ENCODE measurements at regions of chr1 and their contacts with region 1.

Region 1: DNA sequence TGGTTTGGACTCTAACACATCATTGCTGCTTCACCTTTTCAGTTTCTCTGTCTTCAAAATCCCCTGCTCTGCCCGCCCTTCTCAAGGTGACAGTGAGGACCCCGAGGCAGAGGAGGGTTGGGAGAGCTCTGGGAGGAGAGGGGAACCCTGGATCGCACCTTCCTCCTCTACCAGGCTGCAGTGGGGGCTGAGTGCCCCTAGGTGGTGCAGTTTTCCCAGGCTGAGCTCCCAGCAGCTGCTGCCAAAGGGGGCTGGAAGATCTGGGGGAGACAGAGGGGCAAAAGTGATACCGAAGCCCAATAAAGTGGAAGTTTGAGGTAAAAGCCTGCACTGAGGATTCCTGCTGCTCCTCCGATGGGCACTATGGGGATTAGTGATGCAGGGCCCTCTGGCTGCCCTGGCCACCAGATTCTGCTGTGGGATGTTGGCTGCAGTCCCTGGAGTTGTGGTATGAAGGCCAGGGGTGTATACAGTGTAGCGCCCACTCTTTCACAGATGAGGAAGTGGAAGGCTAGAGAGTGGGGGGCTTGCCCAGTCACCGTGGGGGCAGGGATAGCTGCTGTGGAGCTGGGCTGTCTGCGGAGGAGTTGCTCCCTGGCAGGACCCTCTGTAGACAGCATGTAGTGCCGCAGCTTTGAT is 40.7 kb upstream of the SCMH1 start:
- DNase-seq: peak; percentile 73
- ATAC-seq: peak; percentile 88
- H3K4me3 Mint-ChIP-seq: no peak overlapping the region
- H3K27ac Mint-ChIP-seq: no peak overlapping the region
- H3K4me1 Mint-ChIP-seq: peaks cover 15% of the 10 kb centered on the region
- H3K27me3 Mint-ChIP-seq: peaks cover 22% of the 10 kb centered on the region
- CTCF ChIP-seq: peak; percentile 63; the same call in 1 of the 2 replicates

Region 2: DNA sequence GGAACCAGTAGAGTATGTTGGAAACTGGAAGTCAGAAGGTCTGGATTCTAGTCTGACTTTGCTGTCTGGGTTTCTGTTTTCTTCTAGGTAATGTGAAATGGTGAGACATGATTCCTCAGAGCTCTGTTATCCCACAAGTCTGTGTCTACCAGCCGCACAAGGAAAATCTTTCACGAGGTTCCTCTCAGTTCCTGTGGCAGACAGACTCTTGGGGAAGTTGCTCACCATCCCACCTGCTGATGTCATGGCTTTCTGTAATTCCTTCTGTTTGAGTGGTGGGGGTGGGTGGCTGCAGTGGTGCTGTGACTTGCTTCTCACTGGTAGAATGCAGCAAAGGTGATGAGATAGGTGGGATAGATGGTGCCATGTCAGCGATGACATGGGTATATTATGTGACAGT is 23.6 kb before region 1 on chr1:
- CTCF ChIA-PET with region 1: interaction called, 11 read pairs
- POLR2A ChIA-PET with region 1: no interaction called
- DNase-seq: no peak
- ATAC-seq: no peak
- H3K4me3 Mint-ChIP-seq: no peak overlapping the region
- H3K27ac Mint-ChIP-seq: no peak overlapping the region
- H3K4me1 Mint-ChIP-seq: peaks cover 4% of the 10 kb centered on the region; the same call in 1 of the 2 replicates
- H3K27me3 Mint-ChIP-seq: peaks cover 3% of the 10 kb centered on the region; the same call in 1 of the 2 replicates
- CTCF ChIP-seq: no peak

Region 3: GRCh38 chr1:41313661-41314131 is 30.9 kb after region 1 on chr1:
- CTCF ChIA-PET with region 1: interaction called, 48 read pairs
- POLR2A ChIA-PET with region 1: no interaction called
- DNase-seq: peak; percentile 59
- ATAC-seq: peak; percentile 79
- H3K4me3 Mint-ChIP-seq: no peak overlapping the region
- H3K27ac Mint-ChIP-seq: no peak overlapping the region
- H3K4me1 Mint-ChIP-seq: peaks cover 22% of the 10 kb centered on the region
- H3K27me3 Mint-ChIP-seq: peaks cover 10% of the 10 kb centered on the region
- CTCF ChIP-seq: peak; percentile 70

Region 4: GRCh38 chr1:41333146-41333784 is 50.5 kb after region 1 on chr1:
- CTCF ChIA-PET with region 1: interaction called, 35 read pairs
- POLR2A ChIA-PET with region 1: no interaction called
- DNase-seq: no peak
- ATAC-seq: no peak
- H3K4me3 Mint-ChIP-seq: no peak overlapping the region
- H3K27ac Mint-ChIP-seq: no peak overlapping the region
- H3K4me1 Mint-ChIP-seq: peaks cover 11% of the 10 kb centered on the region
- H3K27me3 Mint-ChIP-seq: peaks cover under 1% of the 10 kb centered on the region
- CTCF ChIP-seq: no peak

Region 5: GRCh38 chr1:41416552-41417334 is 133.9 kb after region 1 on chr1:
- CTCF ChIA-PET with region 1: interaction called, 27 read pairs
- POLR2A ChIA-PET with region 1: no interaction called
- DNase-seq: peak; percentile 82
- ATAC-seq: peak; percentile 86
- H3K4me3 Mint-ChIP-seq: no peak overlapping the region
- H3K27ac Mint-ChIP-seq: no peak overlapping the region
- H3K4me1 Mint-ChIP-seq: peaks cover 15% of the 10 kb centered on the region
- H3K27me3 Mint-ChIP-seq: peaks cover 3% of the 10 kb centered on the region; the same call in 1 of the 2 replicates
- CTCF ChIP-seq: peak; percentile 76

Region 6: GRCh38 chr1:41432481-41433280 is 149.9 kb after region 1 on chr1:
- CTCF ChIA-PET with region 1: interaction called, 46 read pairs
- POLR2A ChIA-PET with region 1: no interaction called
- DNase-seq: peak; percentile 94
- ATAC-seq: peak; percentile 85
- H3K4me3 Mint-ChIP-seq: no peak overlapping the region
- H3K27ac Mint-ChIP-seq: no peak overlapping the region
- H3K4me1 Mint-ChIP-seq: peaks cover 33% of the 10 kb centered on the region
- H3K27me3 Mint-ChIP-seq: peaks cover 3% of the 10 kb centered on the region; the same call in 1 of the 2 replicates
- CTCF ChIP-seq: peak; percentile 98